ENCODE measurements at regions of chr1 and their contacts with region 1.

Region 1: GRCh38 chr1:207404849-207405525 is 49.1 kb upstream of the CR2 start:
- DNase-seq: no peak
- H3K4me3 ChIP-seq: no peak overlapping the region
- H3K27ac ChIP-seq: no peak overlapping the region
- H3K4me1 ChIP-seq: no peaks in the 10 kb centered on the region
- H3K27me3 ChIP-seq: no peaks in the 10 kb centered on the region
- CTCF ChIP-seq: peak; percentile 65

Region 2: GRCh38 chr1:207259391-207259790 is 145.6 kb before region 1 on chr1:
- intact Hi-C with region 1: loop called (anchors 2 kb)
- DNase-seq: no peak
- H3K4me3 ChIP-seq: no peak overlapping the region
- H3K27ac ChIP-seq: no peak overlapping the region
- H3K4me1 ChIP-seq: no peaks in the 10 kb centered on the region
- H3K27me3 ChIP-seq: no peaks in the 10 kb centered on the region
- CTCF ChIP-seq: peak; percentile 54

Region 3: GRCh38 chr1:207336559-207337467 is 68.2 kb before region 1 on chr1:
- intact Hi-C with region 1: loop called (anchors 10 kb)
- DNase-seq: no peak
- H3K4me3 ChIP-seq: no peak overlapping the region
- H3K27ac ChIP-seq: no peak overlapping the region
- H3K4me1 ChIP-seq: no peaks in the 10 kb centered on the region
- H3K27me3 ChIP-seq: no peaks in the 10 kb centered on the region
- CTCF ChIP-seq: no peak